K562 (cell line): ENCODE measurements at regions of chr5 and their contacts with region 1.

Region 1: GRCh38 chr5:73215891-73216610 is 43.1 kb downstream of the TMEM174 start:
- DNase-seq: peak; percentile 81 to 88 (median 85)
- ATAC-seq: peak; percentile 100
- H3K4me3 ChIP-seq: peak overlapping the region; percentile 28
- H3K27ac ChIP-seq: no peak overlapping the region
- H3K4me1 ChIP-seq: peaks cover 5 to 10% of the 10 kb centered on the region in 2 experiments; a peak in 3 of 5 replicates
- H3K27me3 ChIP-seq: peaks cover 15 to 35% of the 10 kb centered on the region in 2 experiments
- CTCF ChIP-seq: peak; percentile 73 to 88 (median 73)
- EP300 ChIP-seq: no peak
- POLR2A ChIP-seq: no peak
- RAD21 ChIP-seq: peak; percentile 54 to 68

Region 2: DNA sequence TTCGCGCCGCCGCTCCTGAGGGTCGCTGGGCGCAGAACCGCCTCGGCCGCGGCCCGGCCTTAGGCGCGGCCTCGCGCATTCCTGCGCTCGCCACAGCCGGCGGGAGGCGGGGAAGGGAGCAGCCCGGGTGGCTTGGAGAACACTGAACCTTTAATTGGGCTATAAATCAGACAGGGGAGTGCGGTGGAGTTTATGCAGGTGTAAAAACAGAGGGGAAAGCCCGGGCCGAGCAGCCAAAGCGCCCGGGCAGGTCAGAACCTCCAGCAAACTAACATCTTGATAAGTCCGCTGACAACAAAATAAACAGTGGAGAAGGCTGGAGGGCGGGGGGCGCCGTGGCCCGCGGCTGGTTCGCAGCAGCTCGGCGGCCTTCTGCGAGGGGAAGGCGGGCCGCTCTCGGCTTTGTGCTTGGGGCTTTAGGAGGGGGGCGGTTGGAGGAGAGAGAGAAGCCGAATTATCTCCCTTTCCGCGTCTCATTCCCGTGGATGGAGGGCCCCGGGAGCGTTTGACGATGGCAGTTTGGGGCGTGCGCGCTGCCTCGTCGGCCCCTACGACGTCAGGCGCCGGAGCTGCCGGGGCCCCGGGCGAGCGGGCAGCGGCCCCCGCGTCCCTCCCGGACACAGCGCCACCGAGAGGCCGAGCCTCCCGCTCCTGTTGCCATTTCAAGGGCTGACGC is 221.2 kb after region 1 on chr5:
- CTCF ChIA-PET with region 1: no interaction called
- POLR2A ChIA-PET with region 1: no interaction called
- in situ Hi-C with region 1: no loop called
- intact Hi-C with region 1: loop called (anchors 5 kb)
- DNase-seq: peak; percentile 22 to 68 (median 52)
- ATAC-seq: peak; percentile 93
- H3K4me3 ChIP-seq: peak overlapping the region; percentile 37
- H3K27ac ChIP-seq: no peak overlapping the region
- H3K4me1 ChIP-seq: peaks cover 0 to 14% of the 10 kb centered on the region in 2 experiments; a peak in 2 of 5 replicates
- H3K27me3 ChIP-seq: peaks cover 37% of the 10 kb centered on the region in 2 experiments; a peak in 4 of 5 replicates
- CTCF ChIP-seq: peak; percentile 50 to 68 (median 60)
- EP300 ChIP-seq: no peak
- POLR2A ChIP-seq: no peak
- RAD21 ChIP-seq: 0 out of 4 replicates have a peak, but pooled peaks of 1 of the 2 experiments have one; percentile 10